ENCODE measurements at regions of chr19 and their contacts with region 1.

Region 1: GRCh38 chr19:45792470-45793177 is at the start of gene DMWD:
- DNase-seq: peak; percentile 100
- ATAC-seq: peak; percentile 93
- H3K4me3 Mint-ChIP-seq: peak within 1 kb of the TSS; percentile 95
- H3K27ac Mint-ChIP-seq: peak within 1 kb of the TSS; percentile 75
- H3K4me1 Mint-ChIP-seq: peaks cover 30% of the 10 kb centered on the region
- H3K27me3 Mint-ChIP-seq: peaks cover 16% of the 10 kb centered on the region
- total RNA-seq, gene DMWD: 31.1 to 35.1 TPM

Region 2: GRCh38 chr19:45439569-45440254 is 352.9 kb before region 1 on chr19:
- CTCF ChIA-PET with region 1: no interaction called
- POLR2A ChIA-PET with region 1: no interaction called
- intact Hi-C with region 1: loop called in 1 of 2 experiments (anchors 5 kb)
- DNase-seq: peak; percentile 90
- ATAC-seq: peak; percentile 70
- H3K4me3 Mint-ChIP-seq: peak overlapping the region; percentile 56
- H3K27ac Mint-ChIP-seq: peak overlapping the region; percentile 63
- H3K4me1 Mint-ChIP-seq: peaks cover 33% of the 10 kb centered on the region
- H3K27me3 Mint-ChIP-seq: no peaks in the 10 kb centered on the region

Region 3: DNA sequence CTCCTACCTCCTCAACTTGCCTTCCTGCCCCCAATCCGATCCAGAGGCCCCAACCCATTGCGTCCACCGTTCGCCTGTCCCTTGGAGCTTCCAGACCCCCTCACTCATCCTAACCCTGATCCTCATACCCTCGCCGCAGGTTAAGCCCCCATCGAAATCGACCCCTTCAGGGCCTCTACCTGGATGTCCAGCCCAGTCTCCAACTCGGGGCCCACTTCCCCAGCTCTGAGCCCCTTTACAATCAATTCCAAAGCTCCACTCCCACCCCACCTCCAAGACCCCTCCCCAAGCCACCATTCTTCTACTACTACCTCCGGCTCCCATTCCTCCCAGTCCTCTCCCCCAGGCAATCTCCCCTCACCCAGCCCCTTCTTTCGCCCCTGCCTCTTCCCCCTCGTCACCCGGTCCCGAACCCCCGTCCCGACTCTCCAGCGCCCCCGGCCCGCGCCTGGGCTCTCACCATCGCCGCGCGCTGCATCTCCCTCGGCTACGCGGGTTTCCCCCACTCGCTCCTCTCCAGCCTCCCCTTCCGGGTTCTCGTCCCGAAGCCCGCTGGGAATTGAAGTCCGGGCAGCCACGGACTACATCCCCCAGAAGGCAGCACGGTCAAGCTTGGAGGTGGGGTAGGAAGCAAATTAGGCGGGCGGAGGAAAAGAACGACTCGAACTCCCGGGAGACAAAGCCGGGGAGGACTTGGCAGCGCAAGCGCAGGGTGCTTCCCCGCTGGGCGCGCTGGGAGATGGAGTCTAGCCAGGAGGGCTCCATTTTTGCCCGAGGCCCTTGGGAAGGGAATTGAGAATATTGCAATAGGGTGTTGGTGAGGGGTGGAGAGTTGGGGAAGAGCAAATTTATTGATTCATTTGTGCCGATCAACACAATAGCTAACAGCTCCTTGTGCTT is 62.0 kb before region 1 on chr19 and contains the start of gene FBXO46:
- CTCF ChIA-PET with region 1: no interaction called
- POLR2A ChIA-PET with region 1: no interaction called
- intact Hi-C with region 1: loop called in 1 of 2 experiments (anchors 1 kb)
- DNase-seq: peak; percentile 97
- ATAC-seq: peak; percentile 99
- H3K4me3 Mint-ChIP-seq: peak within 1 kb of the TSS; percentile 88
- H3K27ac Mint-ChIP-seq: peak within 1 kb of the TSS; percentile 90
- H3K4me1 Mint-ChIP-seq: peaks cover 35% of the 10 kb centered on the region
- H3K27me3 Mint-ChIP-seq: no peaks in the 10 kb centered on the region
- total RNA-seq, gene FBXO46: 32.3 to 43.3 TPM

Region 4: DNA sequence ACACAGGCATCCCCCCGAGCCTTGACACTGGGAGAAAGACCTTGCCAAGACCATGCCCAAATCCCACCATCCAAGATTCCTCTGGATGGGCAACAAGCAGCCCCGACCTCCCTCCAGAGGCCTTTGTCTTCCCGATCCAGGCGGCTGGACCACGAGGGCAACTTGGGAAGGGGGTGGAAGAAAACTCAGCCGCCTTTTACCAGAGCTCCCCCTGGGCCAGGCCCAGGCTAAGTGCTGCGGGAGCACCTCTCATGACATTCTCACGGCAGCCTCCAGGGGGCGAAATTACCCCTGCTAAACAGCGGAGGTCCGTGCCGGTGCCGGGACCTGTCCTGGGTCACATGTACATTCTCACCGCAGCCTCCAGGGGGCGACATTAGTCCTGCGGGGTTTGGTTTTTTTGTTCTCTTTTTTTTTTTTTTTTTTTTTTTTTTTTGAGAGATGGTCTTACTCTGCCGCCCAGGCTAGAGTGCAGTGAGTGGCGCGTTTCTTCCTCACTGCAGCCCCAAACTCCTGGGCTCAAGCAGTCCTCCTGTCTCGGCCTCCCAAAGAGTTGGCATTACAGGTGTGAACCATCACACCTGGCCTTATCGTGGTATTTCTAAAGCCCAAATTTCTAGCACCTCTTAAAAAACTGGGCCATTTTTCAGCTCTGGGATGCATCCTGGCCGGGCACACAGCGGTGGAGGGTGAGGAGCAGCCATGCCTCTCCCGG is 24.5 kb after region 1 on chr19:
- CTCF ChIA-PET with region 1: interaction called, 3 read pairs
- POLR2A ChIA-PET with region 1: no interaction called
- intact Hi-C with region 1: loop called in 1 of 2 experiments (anchors 2 kb)
- DNase-seq: peak; percentile 99
- ATAC-seq: peak; percentile 100
- H3K4me3 Mint-ChIP-seq: no peak overlapping the region
- H3K27ac Mint-ChIP-seq: no peak overlapping the region
- H3K4me1 Mint-ChIP-seq: peaks cover 7% of the 10 kb centered on the region
- H3K27me3 Mint-ChIP-seq: peaks cover 10% of the 10 kb centered on the region

Region 5: DNA sequence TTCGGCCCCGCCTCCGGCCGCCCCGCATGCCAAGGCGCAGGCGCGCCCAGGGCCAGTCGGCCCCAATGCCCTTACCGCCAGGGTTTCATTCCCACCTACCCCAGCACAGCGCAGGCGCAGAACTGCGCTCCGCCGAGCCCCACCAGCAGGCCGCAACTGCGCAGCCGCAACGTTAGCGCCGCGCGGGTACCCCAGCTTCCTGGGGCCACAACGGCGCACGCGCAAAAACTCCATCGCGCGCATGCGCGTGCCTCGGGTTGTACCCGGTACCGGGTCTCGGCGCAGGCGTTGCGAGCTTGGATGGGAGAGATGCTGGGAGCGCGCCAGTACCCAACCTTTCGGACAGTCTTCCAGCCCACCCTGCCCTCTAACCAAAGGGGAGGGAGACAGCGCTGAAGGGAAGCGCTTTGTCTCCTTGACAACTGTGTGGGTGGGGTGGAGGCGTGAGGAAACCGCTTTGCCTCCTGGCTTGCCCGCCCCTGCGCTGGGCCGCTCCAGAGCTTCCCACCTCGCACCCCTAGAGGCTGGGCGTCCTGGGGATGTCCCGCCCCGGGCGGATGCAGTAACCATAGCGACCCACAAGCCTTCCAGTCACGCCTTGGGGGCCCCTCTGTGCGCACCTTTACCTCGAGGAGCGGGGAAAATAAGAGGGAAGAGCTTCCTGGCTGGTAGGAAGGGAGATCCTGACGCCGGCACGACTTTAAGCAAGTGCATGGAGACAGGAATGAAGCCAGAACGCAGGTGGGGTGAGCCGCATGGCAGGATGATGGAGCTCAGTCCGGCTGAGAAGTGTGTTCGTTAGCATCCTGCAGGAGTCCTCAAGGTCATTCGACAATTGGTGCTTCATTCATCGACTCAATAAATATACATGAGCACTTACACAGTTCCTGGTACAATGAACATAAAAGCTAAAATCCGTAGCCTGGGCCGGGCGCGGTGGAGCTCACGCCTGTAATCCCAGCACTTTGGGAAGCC is 110.3 kb after region 1 on chr19:
- CTCF ChIA-PET with region 1: no interaction called
- POLR2A ChIA-PET with region 1: no interaction called
- intact Hi-C with region 1: loop called in 1 of 2 experiments (anchors 1 kb)
- DNase-seq: peak; percentile 100
- ATAC-seq: peak; percentile 88
- H3K4me3 Mint-ChIP-seq: peak overlapping the region; percentile 88
- H3K27ac Mint-ChIP-seq: peak overlapping the region; percentile 75
- H3K4me1 Mint-ChIP-seq: peaks cover 16% of the 10 kb centered on the region
- H3K27me3 Mint-ChIP-seq: no peaks in the 10 kb centered on the region

Region 6: DNA sequence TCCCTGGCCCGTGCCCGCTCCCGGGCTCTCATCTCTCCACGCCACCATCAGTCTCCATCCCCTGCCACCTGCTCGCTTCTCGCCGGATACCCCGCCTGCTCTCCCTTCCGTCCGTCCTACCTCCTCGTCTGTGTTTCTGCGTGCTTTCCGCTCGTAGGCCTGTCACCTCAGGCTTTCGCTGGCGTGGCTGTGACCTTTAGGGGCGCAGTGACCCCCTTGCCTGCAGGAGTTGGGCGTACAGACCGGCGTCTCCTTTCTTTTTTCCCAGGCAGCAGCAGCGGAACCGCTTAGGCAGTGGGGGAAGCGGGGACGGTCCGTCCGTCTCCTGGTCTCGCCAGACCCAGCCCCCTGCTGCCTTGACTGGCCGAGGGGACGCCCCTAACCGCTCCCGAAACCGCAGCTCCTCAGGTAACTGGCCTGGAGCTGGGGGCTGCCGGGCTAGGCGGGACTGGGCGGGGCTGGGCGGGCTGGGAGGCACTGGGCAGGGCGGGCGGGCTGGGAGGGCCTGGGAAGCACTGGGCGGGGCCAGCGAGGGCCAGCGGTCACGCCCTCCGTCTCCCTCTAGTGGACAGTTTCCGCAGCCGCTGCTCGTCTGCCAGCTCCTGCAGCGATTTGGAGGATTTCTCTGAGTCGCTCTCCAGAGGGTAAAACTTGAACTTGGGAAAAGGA is 223.9 kb after region 1 on chr19:
- CTCF ChIA-PET with region 1: interaction called, 3 read pairs
- POLR2A ChIA-PET with region 1: no interaction called
- intact Hi-C with region 1: loop called in 1 of 2 experiments (anchors 1 kb)
- DNase-seq: peak; percentile 90
- ATAC-seq: peak; percentile 73
- H3K4me3 Mint-ChIP-seq: peak overlapping the region; percentile 66
- H3K27ac Mint-ChIP-seq: no peak overlapping the region
- H3K4me1 Mint-ChIP-seq: peaks cover 16% of the 10 kb centered on the region
- H3K27me3 Mint-ChIP-seq: peaks cover 14% of the 10 kb centered on the region

Measured in activated CD4-positive, alpha-beta T cell treated with anti-CD3 and anti-CD28 coated beads for 36 hours (primary cell).